Right ventricle myocardium inferior (tissue), 1 donor: ENCODE measurements at regions of chr2 and their contacts with region 1.

Region 1: DNA sequence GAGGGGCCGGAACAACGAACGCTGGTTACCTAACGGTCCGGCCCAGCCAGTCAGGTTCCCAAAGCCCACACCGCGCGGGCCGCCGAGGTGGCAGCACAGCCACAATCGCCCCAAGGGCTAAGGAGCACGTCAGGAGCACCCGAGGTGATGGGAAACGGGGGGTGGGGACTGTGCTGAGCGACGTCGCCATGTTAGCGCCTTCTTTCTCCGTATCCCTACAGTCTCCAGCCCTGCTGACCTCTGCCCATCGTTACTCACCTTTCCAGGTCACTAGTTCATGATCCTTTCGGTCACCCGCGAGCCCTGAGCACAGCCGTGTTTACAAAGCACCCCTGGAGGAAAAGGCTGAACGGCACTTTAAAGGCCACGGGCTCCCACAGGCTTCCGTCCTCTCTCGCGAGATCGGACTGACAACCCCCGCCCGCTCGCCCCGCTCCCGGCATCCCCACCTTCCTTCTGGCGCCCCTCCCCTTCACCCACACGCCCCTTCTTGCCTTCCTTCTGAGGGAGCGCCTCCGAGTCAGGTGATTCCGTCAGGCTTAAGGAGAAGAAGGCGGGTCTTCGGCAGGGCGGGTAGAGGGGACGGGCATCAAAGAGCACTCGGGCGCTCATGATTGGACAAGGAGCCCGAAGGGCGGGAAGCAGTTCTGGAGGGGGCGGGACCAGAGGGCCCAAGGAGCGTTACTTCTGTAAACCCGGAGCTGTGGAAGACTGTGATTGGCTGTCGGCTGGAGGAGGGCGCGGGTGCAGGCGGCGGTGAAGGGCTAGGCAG is at the start of gene ATF2:
- DNase-seq: peak; percentile 99
- ATAC-seq: peak; percentile 99
- total RNA-seq, gene ATF2: 27.6 TPM

Region 2: DNA sequence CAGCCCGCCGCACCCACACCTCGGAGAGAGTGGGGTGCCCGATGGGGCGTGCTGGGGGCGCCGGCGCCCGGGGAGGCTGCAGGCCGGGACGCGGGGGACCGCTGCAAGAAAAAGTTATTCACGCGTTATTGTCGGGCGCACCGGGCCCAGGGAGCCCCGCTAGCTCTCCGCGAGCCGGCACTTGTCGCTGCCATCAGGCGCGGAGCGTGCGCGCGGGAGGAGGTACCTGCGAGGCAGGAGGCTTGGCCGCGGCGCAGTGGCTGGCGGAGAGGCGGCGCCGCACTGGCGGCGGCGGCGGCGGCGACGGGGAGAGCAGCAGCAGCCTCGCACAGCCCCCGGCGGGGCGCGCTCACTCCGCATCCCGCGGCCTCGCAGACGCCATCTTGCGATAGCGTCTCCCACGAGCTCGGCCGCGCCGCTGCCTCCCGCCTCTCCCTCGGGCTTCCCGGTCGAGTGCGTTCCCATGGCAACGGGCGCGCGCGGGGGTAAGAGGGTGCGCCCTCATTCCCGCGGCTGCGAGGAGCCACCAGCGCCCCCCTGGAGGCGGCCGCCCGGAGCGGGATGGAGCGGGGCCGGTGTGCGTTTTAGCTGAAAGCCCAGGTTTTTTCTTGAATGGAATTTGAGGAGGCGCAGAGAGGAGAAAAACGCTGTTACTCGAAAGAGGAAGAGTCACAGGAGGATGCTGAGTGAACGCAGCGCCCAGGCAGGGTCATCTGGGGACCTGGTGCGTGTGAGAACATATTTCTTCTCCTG is 162.8 kb before region 1 on chr2 and contains the start of gene CHN1:
- intact Hi-C with region 1: loop called (anchors 5 kb)
- DNase-seq: peak; percentile 89
- ATAC-seq: peak; percentile 88
- total RNA-seq, gene CHN1: 11.7 TPM

Region 3: GRCh38 chr2:175181104-175181876 is 13.3 kb after region 1 on chr2 and contains the start of gene ATP5MC3:
- intact Hi-C with region 1: loop called (anchors 1 kb)
- DNase-seq: peak; percentile 99
- ATAC-seq: peak; percentile 98
- total RNA-seq, gene ATP5MC3: 1,232 TPM

Region 4: DNA sequence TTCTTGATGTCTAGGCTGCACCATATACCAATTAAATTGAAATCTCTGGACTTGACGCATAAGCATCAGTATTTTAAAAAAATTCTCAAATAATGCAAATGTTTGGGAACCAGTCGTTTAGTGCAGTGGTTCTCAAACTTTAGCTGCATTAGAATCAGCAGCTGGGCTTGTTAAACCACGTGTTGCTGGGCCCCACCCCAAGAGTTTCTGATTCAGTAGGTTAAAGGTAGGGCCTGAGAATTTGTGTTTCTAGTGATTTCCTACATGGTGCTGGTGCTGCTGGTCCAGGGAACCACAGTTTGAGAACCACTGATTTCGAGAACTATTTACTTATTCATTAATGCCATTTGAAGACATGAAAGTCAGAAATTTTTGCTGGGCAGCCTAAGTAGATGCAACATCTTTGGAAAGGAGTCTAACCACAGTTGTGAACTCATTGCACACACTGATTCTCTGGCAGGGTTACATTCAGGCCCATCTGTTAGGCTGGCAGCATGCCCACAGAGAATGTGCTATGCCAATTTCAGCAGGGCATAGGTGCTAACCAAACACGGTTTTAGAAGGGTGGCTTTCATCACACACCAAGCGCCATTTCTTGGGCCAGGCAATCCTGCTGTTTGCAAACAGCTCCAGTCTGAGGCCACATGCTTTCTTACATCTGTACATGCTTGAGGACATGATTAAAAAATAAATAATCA is 39.9 kb after region 1 on chr2:
- intact Hi-C with region 1: no loop called
- DNase-seq: peak; percentile 76
- ATAC-seq: peak; percentile 86